ENCODE measurements at regions of chr2 and their contacts with region 1.

Region 1: GRCh38 chr2:160918906-160919503 is 241.2 kb upstream of the TANK start:
- DNase-seq: peak; percentile 52 to 57
- H3K4me3 ChIP-seq: no peak overlapping the region
- H3K4me3 Mint-ChIP-seq: no peak overlapping the region
- H3K27ac Mint-ChIP-seq: no peak overlapping the region
- H3K4me1 ChIP-seq: no peaks in the 10 kb centered on the region
- H3K4me1 Mint-ChIP-seq: no peaks in the 10 kb centered on the region
- H3K27me3 ChIP-seq: no peaks in the 10 kb centered on the region
- H3K27me3 Mint-ChIP-seq: no peaks in the 10 kb centered on the region
- CTCF ChIP-seq: peak; percentile 57 to 64

Region 2: DNA sequence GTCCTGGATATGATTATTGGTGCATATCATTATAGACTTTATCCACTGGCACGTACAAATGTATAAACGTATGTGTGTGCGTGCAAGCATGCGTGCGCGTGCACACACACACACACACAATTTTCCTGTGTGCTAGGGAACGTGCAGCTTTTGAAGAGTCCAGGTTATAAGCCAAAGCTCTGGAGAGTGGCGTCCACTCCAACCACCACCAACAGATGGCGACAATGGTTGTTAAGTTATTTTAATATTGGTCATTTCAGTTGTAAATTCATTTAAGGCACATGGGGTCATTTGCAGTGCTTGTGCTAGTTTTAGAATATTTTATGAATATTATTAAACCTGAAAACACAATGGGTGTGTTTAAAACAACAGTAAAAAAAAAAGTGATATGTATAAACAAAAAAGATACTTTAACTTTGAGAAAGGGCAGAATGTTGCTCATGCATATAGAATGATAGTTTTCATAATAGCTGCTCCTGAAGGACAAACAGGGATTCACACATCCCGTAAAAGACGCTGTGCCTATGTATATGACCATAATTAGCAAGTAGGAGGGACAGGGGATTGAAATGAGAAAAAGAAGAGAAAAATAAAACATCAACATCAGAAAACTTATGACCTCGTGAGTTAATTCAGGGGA is 594.7 kb before region 1 on chr2:
- CTCF ChIA-PET with region 1: interaction called, 7 read pairs
- POLR2A ChIA-PET with region 1: no interaction called
- intact Hi-C with region 1: loop called (anchors 1 kb)
- DNase-seq: peak; percentile 47 to 66
- H3K4me3 ChIP-seq: no peak overlapping the region
- H3K4me3 Mint-ChIP-seq: no peak overlapping the region
- H3K27ac Mint-ChIP-seq: no peak overlapping the region
- H3K4me1 ChIP-seq: peaks cover 13% of the 10 kb centered on the region
- H3K4me1 Mint-ChIP-seq: peaks cover 26% of the 10 kb centered on the region
- H3K27me3 ChIP-seq: no peaks in the 10 kb centered on the region
- H3K27me3 Mint-ChIP-seq: no peaks in the 10 kb centered on the region
- CTCF ChIP-seq: peak; percentile 70 to 74

Region 3: GRCh38 chr2:160429248-160430000 is 489.6 kb before region 1 on chr2:
- CTCF ChIA-PET with region 1: interaction called, 6 read pairs
- POLR2A ChIA-PET with region 1: no interaction called
- intact Hi-C with region 1: loop called (anchors 5 kb)
- DNase-seq: peak in 1 of 2 experiments; percentile 18
- H3K4me3 ChIP-seq: no peak overlapping the region
- H3K4me3 Mint-ChIP-seq: no peak overlapping the region
- H3K27ac Mint-ChIP-seq: no peak overlapping the region
- H3K4me1 ChIP-seq: peaks cover 16% of the 10 kb centered on the region
- H3K4me1 Mint-ChIP-seq: peaks cover 17% of the 10 kb centered on the region
- H3K27me3 ChIP-seq: no peaks in the 10 kb centered on the region
- H3K27me3 Mint-ChIP-seq: no peaks in the 10 kb centered on the region
- CTCF ChIP-seq: peak; percentile 43 to 48

Measured in Caco-2 (cell line).